Psoas muscle (tissue), 8 donors: ENCODE measurements at regions of chr3 and their contacts with region 1.

Region 1: DNA sequence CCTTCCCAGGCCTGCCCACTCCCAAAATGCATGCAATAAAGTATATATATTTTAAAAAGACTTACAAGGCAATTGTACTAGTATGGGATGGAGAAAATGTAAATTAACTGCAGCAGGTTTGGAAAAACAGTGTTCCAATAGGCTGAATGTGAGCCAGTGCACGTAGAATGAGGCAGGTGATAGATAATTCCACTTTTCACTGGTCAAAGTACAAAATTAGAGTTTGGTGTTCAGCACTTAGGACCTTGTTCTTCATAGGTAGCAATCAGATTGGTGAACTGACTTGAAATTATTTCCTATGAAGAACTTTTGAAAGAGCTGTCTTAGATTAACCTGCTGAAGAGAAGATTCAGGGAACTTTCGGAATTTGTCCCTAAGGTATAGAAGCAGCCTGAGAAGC is 1.9 kb downstream of the WDR48 start:
- DNase-seq: no peak
- ATAC-seq: no peak
- H3K4me3 ChIP-seq: peak overlapping the region; percentile 86
- H3K27ac ChIP-seq: no peak overlapping the region
- H3K4me1 ChIP-seq: peaks cover 29% of the 10 kb centered on the region
- H3K27me3 ChIP-seq: no peaks in the 10 kb centered on the region
- CTCF ChIP-seq: no peak

Region 2: GRCh38 chr3:39079530-39079929 is 25.8 kb after region 1 on chr3:
- intact Hi-C with region 1: loop called in 1 of 2 experiments (anchors 1 kb)
- DNase-seq: no peak
- ATAC-seq: no peak
- H3K4me3 ChIP-seq: no peak overlapping the region
- H3K27ac ChIP-seq: no peak overlapping the region
- H3K4me1 ChIP-seq: no peaks in the 10 kb centered on the region
- H3K27me3 ChIP-seq: no peaks in the 10 kb centered on the region
- CTCF ChIP-seq: no peak